Common myeloid progenitor, CD34-positive (primary cell): ENCODE measurements at regions of chr9 and their contacts with region 1.

Region 1: DNA sequence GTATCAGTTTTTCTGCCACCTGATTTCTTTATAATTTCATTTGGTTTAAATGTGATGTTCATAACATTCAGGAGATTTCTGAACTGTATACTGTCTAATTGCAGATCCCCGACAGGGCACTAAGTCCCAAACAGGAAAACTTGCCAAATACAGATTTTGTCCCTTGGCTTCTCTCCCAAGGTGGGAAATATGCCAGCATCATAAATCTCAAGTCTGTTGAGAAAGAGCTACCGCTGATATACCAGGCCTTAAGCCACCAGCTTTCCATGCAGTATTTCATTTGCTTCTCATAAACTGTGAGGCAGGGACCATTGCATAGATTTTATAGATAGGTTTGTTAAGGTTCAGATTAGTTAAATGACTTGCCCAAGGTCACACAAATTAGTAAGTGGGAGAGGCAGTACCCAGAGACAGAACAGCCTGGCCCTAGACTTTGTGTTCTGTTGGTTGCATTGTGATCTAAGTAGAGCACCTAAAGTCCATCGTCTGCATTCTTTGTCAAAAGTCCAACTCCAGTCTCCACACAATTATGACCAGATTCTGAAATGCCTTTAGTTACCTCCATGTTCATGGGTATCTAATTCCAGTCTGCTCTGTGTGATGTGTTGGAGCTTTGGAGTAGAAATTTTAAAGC is 16.2 kb downstream of the GPR21 start:
- DNase-seq: peak in 1 of 3 donors; percentile 31
- H3K4me3 ChIP-seq: peak overlapping the region in 3 of 7 experiments; percentile 11 to 43 (median 29)
- H3K27ac ChIP-seq: peak overlapping the region; percentile 36 to 47
- H3K4me1 ChIP-seq: peaks cover 3 to 85% (median 27%) of the 10 kb centered on the region in 4 experiments
- H3K27me3 ChIP-seq: no peaks in the 10 kb centered on the region

Region 2: DNA sequence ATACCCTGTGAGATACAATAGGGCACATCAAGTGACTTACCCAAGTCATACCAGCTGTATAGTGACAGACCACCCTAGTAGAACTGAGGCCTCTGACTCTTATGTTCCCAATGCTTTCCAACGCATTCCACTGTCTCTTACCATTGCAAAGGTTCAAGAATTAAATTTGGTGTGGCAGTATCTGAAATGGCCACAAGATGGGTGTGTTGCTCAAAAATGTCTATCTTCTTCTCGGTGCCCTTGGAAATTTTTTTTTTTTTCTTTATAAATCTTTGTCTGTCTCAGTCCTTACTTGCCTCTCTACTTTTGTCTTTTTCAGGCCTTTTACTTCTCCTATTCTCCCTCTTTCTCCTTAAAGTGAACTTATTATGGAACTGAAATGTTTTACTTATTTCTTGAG is 32.1 kb after region 1 on chr9:
- CTCF ChIA-PET with region 1: interaction called, 14 read pairs
- POLR2A ChIA-PET with region 1: no interaction called
- DNase-seq: peak; percentile 58 to 76 (median 74)
- H3K4me3 ChIP-seq: no peak overlapping the region
- H3K27ac ChIP-seq: no peak overlapping the region
- H3K4me1 ChIP-seq: peaks cover 8 to 20% (median 16%) of the 10 kb centered on the region in 4 experiments
- H3K27me3 ChIP-seq: no peaks in the 10 kb centered on the region